Activated T-helper 1 cell treated with anti-CD3 and anti-CD28 coated beads, Interleukin-12 subunit alpha, Interleukin-12 subunit beta, Interleukin-2, Interleukin-4 antibody, amounts not matched to agents 30 ng/mL and 10 ng/mL and 1 ng/mL, durations not matched to agents 14 hours and 24 hours and 36 hours (primary cell): ENCODE measurements at regions of chr11 and their contacts with region 1.

Region 1: GRCh38 chr11:108008656-108009496 is at the start of gene CUL5:
- DNase-seq: peak; percentile 85
- H3K4me3 Mint-ChIP-seq: peak within 1 kb of the TSS; percentile 97
- H3K27ac Mint-ChIP-seq: peak within 1 kb of the TSS; percentile 93
- H3K4me1 Mint-ChIP-seq: peaks cover 15% of the 10 kb centered on the region
- H3K27me3 Mint-ChIP-seq: no peaks in the 10 kb centered on the region
- total RNA-seq, gene CUL5: 37.0 and 41.3 TPM in 2 replicates

Region 2: DNA sequence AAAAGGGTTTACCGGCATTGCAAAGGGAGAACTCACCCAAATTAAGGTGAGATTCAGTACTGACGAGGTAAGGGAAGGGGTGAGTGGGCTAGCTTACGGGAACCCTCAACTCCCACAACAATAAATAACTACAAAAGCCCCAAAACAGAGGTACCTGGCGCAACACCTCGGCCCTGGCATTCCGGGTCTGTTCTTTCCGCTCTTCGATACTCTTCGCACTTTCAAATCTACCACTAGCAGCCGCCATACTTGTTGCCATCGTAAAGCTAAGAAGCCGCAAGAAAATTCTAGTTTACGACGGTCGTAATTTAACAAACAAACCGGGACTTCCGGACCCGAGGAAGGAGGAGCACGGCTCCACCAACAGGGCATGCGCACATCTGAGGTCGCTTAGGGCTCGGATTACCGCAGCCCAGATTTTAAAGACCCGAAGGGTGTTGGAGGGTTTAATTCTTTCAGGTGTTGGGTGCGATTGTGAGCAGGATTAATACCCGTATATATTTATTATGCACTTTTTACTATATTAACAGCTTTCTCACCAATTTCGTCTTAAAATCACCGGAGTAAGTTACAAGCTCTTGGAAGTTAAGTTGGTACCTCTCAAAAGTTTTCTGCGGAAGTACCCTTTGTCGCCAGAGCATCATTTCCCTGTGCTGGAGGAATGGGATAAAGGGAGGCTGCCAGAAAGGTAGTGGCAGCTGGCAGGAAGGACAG is 551.2 kb before region 1 on chr11 and contains the start of gene CWF19L2:
- intact Hi-C with region 1: loop called (anchors 5 kb)
- DNase-seq: peak; percentile 88
- H3K4me3 Mint-ChIP-seq: peak within 1 kb of the TSS; percentile 91
- H3K27ac Mint-ChIP-seq: peak within 1 kb of the TSS; percentile 87
- H3K4me1 Mint-ChIP-seq: peaks cover 28% of the 10 kb centered on the region
- H3K27me3 Mint-ChIP-seq: peaks cover 9% of the 10 kb centered on the region
- total RNA-seq, gene CWF19L2: 16.5 and 16.7 TPM in 2 replicates

Region 3: DNA sequence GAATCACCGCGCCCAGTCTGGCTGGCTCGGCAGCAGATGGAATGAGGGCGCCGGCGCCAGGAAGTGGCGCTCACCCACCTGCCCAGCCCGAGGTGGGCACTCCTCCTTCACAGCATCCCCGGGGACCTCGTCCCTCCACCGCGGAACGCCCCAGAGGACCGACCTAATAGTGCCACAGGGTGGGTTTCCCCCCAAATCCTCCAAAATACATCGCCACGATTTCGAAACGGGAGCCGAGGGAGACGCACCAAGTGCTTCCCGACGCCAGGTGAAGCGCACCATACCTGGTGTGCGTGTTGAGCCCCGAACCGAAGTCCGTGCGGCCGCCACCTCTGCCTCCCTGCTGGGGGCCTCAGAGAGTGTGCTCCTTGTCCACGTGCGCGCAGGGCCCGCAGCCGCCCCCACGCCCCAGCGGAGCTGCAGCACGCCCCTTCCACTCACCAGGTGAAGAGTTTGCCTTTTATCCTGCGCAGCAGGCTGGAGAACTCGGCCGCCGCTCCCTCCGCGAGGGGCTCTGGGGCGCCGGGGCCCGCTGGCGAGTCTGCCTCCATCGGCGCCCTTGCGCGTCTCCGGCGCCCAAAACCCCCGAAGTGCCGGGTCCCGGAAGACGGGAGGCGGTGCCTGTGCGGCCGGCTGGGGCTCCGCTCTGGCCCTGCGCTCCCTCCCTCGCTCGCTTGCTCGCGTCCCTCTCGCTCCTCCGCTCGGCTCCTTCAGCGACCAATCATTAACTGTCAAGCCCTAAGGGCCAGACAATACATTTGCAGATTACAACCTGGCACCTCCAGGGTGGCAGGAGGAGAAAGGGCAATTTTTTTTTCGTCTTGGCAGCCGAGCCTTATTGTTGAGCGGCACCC is 150.4 kb before region 1 on chr11 and contains the start of gene SLC35F2:
- intact Hi-C with region 1: loop called (anchors 1 kb)
- DNase-seq: peak; percentile 62
- H3K4me3 Mint-ChIP-seq: peak within 1 kb of the TSS; percentile 95
- H3K27ac Mint-ChIP-seq: peak within 1 kb of the TSS; percentile 83
- H3K4me1 Mint-ChIP-seq: peaks cover 26% of the 10 kb centered on the region
- H3K27me3 Mint-ChIP-seq: peaks cover 8% of the 10 kb centered on the region
- total RNA-seq, gene SLC35F2: 36.5 and 38.0 TPM in 2 replicates

Region 4: DNA sequence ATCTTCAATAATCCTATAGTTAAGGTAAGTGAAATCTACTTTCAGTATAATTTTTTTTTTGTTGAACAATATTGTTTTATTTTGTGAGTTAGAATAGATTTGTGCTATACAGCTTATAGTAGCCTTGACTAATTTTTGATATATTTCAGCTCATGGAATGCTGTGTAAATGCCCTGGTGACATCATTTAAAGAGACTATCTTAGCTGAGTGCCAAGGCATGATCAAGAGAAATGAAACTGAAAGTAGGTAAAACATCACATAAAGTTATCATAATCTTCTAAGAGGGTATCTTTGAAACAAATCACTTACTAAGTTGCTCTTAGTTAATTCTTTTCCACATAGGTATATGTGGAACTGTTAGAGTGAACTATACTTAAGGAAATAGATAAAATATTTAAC is 61.1 kb after region 1 on chr11:
- intact Hi-C with region 1: loop called (anchors 1 kb)
- DNase-seq: no peak
- H3K4me3 Mint-ChIP-seq: peak overlapping the region; percentile 39
- H3K27ac Mint-ChIP-seq: peak overlapping the region; percentile 44
- H3K4me1 Mint-ChIP-seq: peaks cover 16% of the 10 kb centered on the region
- H3K27me3 Mint-ChIP-seq: no peaks in the 10 kb centered on the region

Region 5: DNA sequence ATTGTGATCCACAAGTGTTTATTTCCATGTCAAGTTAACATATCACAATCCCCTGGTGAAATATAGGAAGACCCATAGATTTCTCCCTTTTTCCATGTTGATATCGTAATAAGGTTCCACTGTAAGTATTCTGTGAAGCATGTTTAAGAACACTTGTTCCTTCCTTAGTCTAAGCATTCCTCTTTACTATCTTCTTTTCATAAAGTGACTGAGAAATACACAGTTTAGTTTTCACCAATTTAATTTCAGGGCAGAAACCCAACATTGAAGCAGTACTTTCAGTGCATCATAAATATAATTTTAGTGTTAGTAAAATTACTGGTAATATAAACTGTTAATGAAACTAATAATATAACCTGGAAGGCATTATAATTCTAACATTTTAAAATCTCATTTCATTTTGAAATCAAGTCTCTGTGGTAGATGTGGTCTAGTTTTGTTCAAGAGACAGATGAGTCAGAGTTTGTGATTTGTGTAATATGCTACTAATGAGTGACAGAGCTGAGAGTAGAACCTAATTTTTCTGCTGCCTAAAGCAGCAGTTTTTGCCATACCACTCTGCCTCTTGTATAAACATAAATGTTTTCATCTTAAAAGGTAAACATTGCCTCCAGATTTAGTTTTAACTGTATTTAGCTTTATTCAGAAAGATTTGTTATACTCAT is 293.4 kb after region 1 on chr11:
- intact Hi-C with region 1: no loop called
- DNase-seq: no peak
- H3K4me3 Mint-ChIP-seq: no peak overlapping the region
- H3K27ac Mint-ChIP-seq: no peak overlapping the region
- H3K4me1 Mint-ChIP-seq: no peaks in the 10 kb centered on the region
- H3K27me3 Mint-ChIP-seq: no peaks in the 10 kb centered on the region

Region 6: DNA sequence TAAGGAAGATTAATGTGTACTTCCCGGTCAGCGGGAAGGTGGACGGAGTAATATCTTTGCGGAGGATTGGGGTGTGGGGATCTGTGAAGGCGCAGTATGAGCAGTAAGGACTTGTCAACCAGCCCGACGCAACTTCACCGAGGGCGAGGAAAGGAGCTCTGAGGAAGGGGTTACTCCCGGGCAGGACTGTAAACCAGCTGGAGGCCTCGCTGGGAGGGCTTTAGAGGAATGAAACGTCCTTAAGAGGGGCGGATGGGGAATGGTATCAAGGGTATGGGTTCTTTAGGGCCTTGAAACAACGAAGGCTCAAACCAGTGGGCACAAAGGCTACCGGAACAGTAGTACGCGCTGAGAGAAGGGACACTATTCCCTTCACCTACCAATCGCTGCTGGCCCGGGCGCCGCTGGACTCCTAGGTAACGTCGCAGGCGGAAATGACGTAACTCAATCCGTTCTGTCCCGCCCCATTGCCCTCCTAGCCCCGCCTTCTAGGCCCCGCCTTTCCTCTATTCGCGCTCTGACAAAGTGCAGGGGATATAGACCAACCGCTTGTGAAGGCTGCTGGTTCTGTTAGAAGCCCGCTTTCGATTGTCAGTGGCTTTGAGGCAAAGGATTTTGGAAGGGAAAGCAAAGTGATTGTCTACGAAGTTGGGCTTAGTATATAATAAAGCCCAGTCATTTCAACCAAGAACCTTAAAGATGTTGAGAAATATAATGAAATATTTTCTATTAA is 458.4 kb after region 1 on chr11 and contains the start of gene C11orf65:
- intact Hi-C with region 1: loop called (anchors 2 kb)
- DNase-seq: peak; percentile 94
- H3K4me3 Mint-ChIP-seq: peak within 1 kb of the TSS; percentile 98
- H3K27ac Mint-ChIP-seq: peak within 1 kb of the TSS; percentile 100
- H3K4me1 Mint-ChIP-seq: peaks cover 23% of the 10 kb centered on the region
- H3K27me3 Mint-ChIP-seq: peaks cover 3% of the 10 kb centered on the region
- total RNA-seq, gene C11orf65: 0.57 and 0.64 TPM in 2 replicates

Region 7: GRCh38 chr11:108647701-108648527 is 639.0 kb after region 1 on chr11:
- intact Hi-C with region 1: loop called (anchors 1 kb)
- DNase-seq: peak; percentile 47
- H3K4me3 Mint-ChIP-seq: no peak overlapping the region
- H3K27ac Mint-ChIP-seq: no peak overlapping the region
- H3K4me1 Mint-ChIP-seq: no peaks in the 10 kb centered on the region
- H3K27me3 Mint-ChIP-seq: peaks cover 4% of the 10 kb centered on the region